ENCODE measurements at regions of chr17 and their contacts with region 1.

Region 1: GRCh38 chr17:48871551-48872351 is 20.8 kb upstream of the ATP5MC1 start:
- DNase-seq: peak; percentile 98 to 99
- H3K4me3 ChIP-seq: no peak overlapping the region
- H3K4me3 Mint-ChIP-seq: peak overlapping the region; percentile 50
- H3K27ac Mint-ChIP-seq: peak overlapping the region; percentile 85
- H3K4me1 ChIP-seq: peaks cover 54% of the 10 kb centered on the region
- H3K4me1 Mint-ChIP-seq: peaks cover 66% of the 10 kb centered on the region
- H3K27me3 ChIP-seq: no peaks in the 10 kb centered on the region
- H3K27me3 Mint-ChIP-seq: no peaks in the 10 kb centered on the region
- CTCF ChIP-seq: no peak

Region 2: GRCh38 chr17:48107168-48108132 is 764.3 kb before region 1 on chr17 and contains the start of gene SNX11:
- CTCF ChIA-PET with region 1: no interaction called
- POLR2A ChIA-PET with region 1: interaction called, 19 read pairs
- intact Hi-C with region 1: no loop called
- DNase-seq: peak; percentile 100
- H3K4me3 ChIP-seq: peak within 1 kb of the TSS; percentile 60
- H3K4me3 Mint-ChIP-seq: peak within 1 kb of the TSS; percentile 95
- H3K27ac Mint-ChIP-seq: peak within 1 kb of the TSS; percentile 95
- H3K4me1 ChIP-seq: 0 out of 2 replicates have a peak, but pooled peaks cover 6% of the 10 kb centered on the region
- H3K4me1 Mint-ChIP-seq: peaks cover 7% of the 10 kb centered on the region
- H3K27me3 ChIP-seq: no peaks in the 10 kb centered on the region
- H3K27me3 Mint-ChIP-seq: no peaks in the 10 kb centered on the region
- CTCF ChIP-seq: peak; percentile 33 to 48
- total RNA-seq, gene SNX11: 36.7 and 40.7 TPM in 2 replicates

Region 3: DNA sequence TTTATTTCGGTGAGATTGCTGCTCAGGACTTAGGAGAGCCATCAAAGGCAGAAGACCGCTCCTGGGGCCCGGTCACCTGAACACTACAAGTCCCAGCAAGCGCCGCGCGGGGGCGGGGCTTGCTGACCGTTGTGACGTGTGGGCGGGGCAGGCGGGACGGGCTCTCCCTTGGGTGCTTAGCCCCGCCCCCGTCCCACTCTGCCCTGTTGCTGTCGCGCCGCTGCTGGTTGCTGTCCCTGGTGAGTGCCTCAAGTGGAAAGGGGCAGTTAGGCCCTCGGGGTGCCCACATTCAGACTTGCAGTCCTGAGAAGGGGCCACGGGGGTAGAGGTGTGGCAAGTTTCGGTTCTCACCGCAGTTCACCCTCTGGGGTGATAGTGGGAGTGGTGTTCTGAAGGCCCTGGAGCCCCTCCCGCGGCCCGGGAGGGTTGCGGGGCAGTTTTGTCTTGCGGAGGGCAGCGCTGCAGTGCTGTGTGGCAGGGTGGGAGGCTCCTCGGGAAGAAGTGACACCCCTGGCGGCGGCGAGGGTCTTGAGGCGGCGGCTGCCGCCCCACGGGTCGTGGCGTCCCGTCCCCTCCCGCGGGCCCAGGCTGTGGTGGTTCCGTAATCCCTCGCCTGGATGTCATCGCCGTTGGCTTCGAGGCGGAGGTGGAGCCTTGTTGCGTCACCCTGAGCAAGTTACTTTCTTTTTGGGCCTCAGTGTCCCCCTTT is 40.8 kb before region 1 on chr17 and contains the start of gene CALCOCO2:
- CTCF ChIA-PET with region 1: interaction called, 3 read pairs
- POLR2A ChIA-PET with region 1: no interaction called
- intact Hi-C with region 1: loop called (anchors 1 kb)
- DNase-seq: peak; percentile 99 to 100
- H3K4me3 ChIP-seq: peak within 1 kb of the TSS; percentile 89
- H3K4me3 Mint-ChIP-seq: peak within 1 kb of the TSS; percentile 99
- H3K27ac Mint-ChIP-seq: peak within 1 kb of the TSS; percentile 99
- H3K4me1 ChIP-seq: peaks cover 10% of the 10 kb centered on the region
- H3K4me1 Mint-ChIP-seq: no peaks in the 10 kb centered on the region
- H3K27me3 ChIP-seq: no peaks in the 10 kb centered on the region
- H3K27me3 Mint-ChIP-seq: no peaks in the 10 kb centered on the region
- CTCF ChIP-seq: peak in 1 of 2 experiments; percentile 24
- total RNA-seq, gene CALCOCO2: 233 and 251 TPM in 2 replicates

Region 4: GRCh38 chr17:48850792-48851323 is 20.9 kb before region 1 on chr17:
- CTCF ChIA-PET with region 1: interaction called, 4 read pairs
- POLR2A ChIA-PET with region 1: interaction called, 5 read pairs
- intact Hi-C with region 1: loop called (anchors 2 kb)
- DNase-seq: no peak
- H3K4me3 ChIP-seq: no peak overlapping the region
- H3K4me3 Mint-ChIP-seq: no peak overlapping the region
- H3K27ac Mint-ChIP-seq: no peak overlapping the region
- H3K4me1 ChIP-seq: peaks cover 18% of the 10 kb centered on the region
- H3K4me1 Mint-ChIP-seq: peaks cover 10% of the 10 kb centered on the region
- H3K27me3 ChIP-seq: no peaks in the 10 kb centered on the region
- H3K27me3 Mint-ChIP-seq: no peaks in the 10 kb centered on the region
- CTCF ChIP-seq: no peak

Region 5: GRCh38 chr17:48908047-48908843 is 36.5 kb after region 1 on chr17 and contains the start of gene UBE2Z:
- CTCF ChIA-PET with region 1: interaction called, 5 read pairs
- POLR2A ChIA-PET with region 1: no interaction called
- intact Hi-C with region 1: loop called (anchors 1 kb)
- DNase-seq: peak; percentile 99
- H3K4me3 ChIP-seq: peak within 1 kb of the TSS; percentile 94
- H3K4me3 Mint-ChIP-seq: peak within 1 kb of the TSS; percentile 89
- H3K27ac Mint-ChIP-seq: peak within 1 kb of the TSS; percentile 95
- H3K4me1 ChIP-seq: peaks cover 26% of the 10 kb centered on the region
- H3K4me1 Mint-ChIP-seq: peaks cover 37% of the 10 kb centered on the region
- H3K27me3 ChIP-seq: no peaks in the 10 kb centered on the region
- H3K27me3 Mint-ChIP-seq: no peaks in the 10 kb centered on the region
- CTCF ChIP-seq: peak in 1 of 2 experiments; percentile 68
- total RNA-seq, gene UBE2Z: 182 and 187 TPM in 2 replicates

Region 6: GRCh38 chr17:48927978-48928732 is 56.4 kb after region 1 on chr17:
- CTCF ChIA-PET with region 1: no interaction called
- POLR2A ChIA-PET with region 1: no interaction called
- intact Hi-C with region 1: no loop called
- DNase-seq: no peak
- H3K4me3 ChIP-seq: no peak overlapping the region
- H3K4me3 Mint-ChIP-seq: no peak overlapping the region
- H3K27ac Mint-ChIP-seq: no peak overlapping the region
- H3K4me1 ChIP-seq: no peaks in the 10 kb centered on the region
- H3K4me1 Mint-ChIP-seq: no peaks in the 10 kb centered on the region
- H3K27me3 ChIP-seq: no peaks in the 10 kb centered on the region
- H3K27me3 Mint-ChIP-seq: no peaks in the 10 kb centered on the region
- CTCF ChIP-seq: no peak